Mammary epithelial cell (primary cell): ENCODE measurements at regions of chr13 and their contacts with region 1.

Region 1: DNA sequence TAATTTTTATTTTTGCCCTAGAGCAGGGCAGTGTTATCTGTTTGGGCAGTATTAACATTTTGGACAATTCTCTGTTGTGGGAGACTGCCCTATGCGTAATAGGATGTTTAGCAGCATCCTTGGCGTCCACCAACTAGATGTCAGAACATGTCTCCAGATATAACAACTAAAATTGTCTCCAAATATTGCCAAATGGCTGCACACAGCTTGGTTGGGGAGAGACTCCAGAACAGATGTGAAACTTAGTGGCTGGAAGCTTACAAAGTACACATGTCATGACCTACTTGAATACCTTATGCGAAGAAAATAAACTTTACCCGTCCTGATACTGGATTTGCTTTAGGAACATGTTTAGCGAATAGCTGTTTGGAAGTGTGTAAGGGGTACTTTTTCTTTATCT is 123.0 kb downstream of the GGACT start:
- DNase-seq: no peak
- H3K4me3 ChIP-seq: no peak overlapping the region
- H3K27ac ChIP-seq: no peak overlapping the region
- H3K4me1 ChIP-seq: no peaks in the 10 kb centered on the region
- H3K27me3 ChIP-seq: no peaks in the 10 kb centered on the region
- CTCF ChIP-seq: no peak

Region 2: GRCh38 chr13:100434010-100434763 is 31.4 kb before region 1 on chr13:
- CTCF ChIA-PET with region 1: no interaction called
- dilution Hi-C with region 1: loop called (anchors 5 kb)
- in situ Hi-C with region 1: no loop called
- intact Hi-C with region 1: no loop called
- DNase-seq: peak; percentile 54
- H3K4me3 ChIP-seq: no peak overlapping the region
- H3K27ac ChIP-seq: no peak overlapping the region
- H3K4me1 ChIP-seq: peaks cover 8% of the 10 kb centered on the region
- H3K27me3 ChIP-seq: no peaks in the 10 kb centered on the region
- CTCF ChIP-seq: no peak